ENCODE measurements at regions of chr2 and their contacts with region 1.

Region 1: DNA sequence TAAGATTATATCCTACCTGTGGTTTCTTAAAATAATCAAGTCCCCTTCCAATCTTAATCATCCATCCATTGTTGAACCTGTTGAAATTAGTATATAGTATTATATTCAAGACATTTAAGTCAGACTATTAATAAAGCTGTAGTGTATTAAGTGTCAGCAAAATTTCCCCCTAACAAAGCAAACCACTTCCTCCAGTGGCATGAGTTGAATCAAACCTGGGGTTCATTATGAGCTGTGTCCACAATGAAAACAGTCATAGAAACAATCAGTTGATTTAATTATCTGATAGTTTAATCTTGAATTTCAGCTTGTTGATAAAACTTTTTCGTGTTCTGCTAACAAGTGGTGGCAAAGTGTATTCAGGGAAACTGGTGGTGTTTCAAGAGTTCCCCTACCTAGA is 11.3 kb downstream of the MITD1 start:
- DNase-seq: no peak
- ATAC-seq: no peak
- H3K4me3 ChIP-seq: no peak overlapping the region
- H3K27ac ChIP-seq: no peak overlapping the region
- H3K4me1 ChIP-seq: no peaks in the 10 kb centered on the region
- H3K27me3 ChIP-seq: no peaks in the 10 kb centered on the region
- CTCF ChIP-seq: no peak

Region 2: GRCh38 chr2:99325363-99325762 is 155.8 kb after region 1 on chr2:
- intact Hi-C with region 1: loop called in 1 of 2 experiments (anchors 10 kb)
- DNase-seq: no peak
- ATAC-seq: no peak
- H3K4me3 ChIP-seq: no peak overlapping the region
- H3K27ac ChIP-seq: no peak overlapping the region
- H3K4me1 ChIP-seq: no peaks in the 10 kb centered on the region
- H3K27me3 ChIP-seq: no peaks in the 10 kb centered on the region
- CTCF ChIP-seq: no peak